SK-N-SH (cell line): ENCODE measurements at regions of chr11 and their contacts with region 1.

Region 1: GRCh38 chr11:76734456-76735420 is 48.4 kb upstream of the TSKU start:
- DNase-seq: no peak
- H3K4me3 ChIP-seq: no peak overlapping the region
- H3K27ac ChIP-seq: peak overlapping the region in 1 of 2 experiments; percentile 3; a peak in 1 of 4 replicates
- H3K4me1 ChIP-seq: peaks cover 0 to 16% of the 10 kb centered on the region in 2 experiments; a peak in 1 of 4 replicates
- H3K27me3 ChIP-seq: peaks cover 6% of the 10 kb centered on the region; the same call in 1 of the 2 replicates
- CTCF ChIP-seq: no peak
- EP300 ChIP-seq: no peak
- RAD21 ChIP-seq: no peak

Region 2: DNA sequence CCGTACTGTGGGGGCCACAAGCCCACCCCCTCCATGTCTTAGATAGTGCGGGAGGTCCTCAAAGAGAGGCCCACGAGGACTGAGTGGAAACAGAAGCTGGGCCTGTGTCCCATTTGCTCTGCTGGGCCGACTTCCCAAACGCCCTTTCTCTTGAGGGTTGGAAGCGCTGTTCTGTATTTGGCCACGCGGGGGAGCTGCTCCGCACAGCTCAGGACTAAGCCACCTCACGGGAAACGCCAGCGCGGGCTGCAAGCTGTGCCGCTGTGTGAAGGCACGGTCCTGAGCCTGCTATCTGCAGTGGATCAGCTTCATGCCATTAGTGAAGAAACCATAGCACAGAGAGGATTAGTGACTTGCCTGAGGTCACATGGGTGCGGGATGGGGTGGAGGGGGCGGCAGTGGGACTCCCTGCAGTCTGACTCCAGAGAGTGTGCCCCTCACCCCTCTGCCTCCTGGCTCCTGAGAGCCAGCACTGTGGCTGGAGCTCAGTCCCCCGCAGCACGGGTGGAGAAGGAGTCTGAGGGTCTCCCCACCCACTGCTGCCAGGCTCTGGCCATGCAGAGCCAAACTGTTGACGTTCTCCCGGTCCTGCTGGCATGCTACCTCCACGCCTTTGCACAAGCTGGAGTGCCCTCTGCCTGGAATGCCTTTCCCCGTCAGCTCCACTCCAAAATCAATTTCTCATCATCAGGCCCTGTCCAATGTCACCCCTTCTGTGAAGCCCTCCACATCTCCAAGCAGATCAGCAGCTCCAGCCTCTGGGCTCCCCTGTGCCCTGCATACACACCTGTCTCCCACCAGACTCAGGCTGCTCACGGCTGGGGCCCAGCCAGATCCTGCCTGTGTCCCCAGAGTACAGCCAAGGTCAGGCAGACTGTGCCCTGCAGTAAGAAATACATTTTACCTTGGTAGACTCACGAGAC is 12.7 kb before region 1 on chr11:
- CTCF ChIA-PET with region 1: interaction called, 37 read pairs
- POLR2A ChIA-PET with region 1: no interaction called
- DNase-seq: peak; percentile 86
- H3K4me3 ChIP-seq: peak overlapping the region in 1 of 2 experiments; percentile 40; a peak in 2 of 4 replicates
- H3K27ac ChIP-seq: no peak overlapping the region; a peak in 1 of 4 replicates
- H3K4me1 ChIP-seq: peaks cover 0 to 4% of the 10 kb centered on the region in 2 experiments; a peak in 1 of 4 replicates
- H3K27me3 ChIP-seq: peaks cover 21% of the 10 kb centered on the region; the same call in 1 of the 2 replicates
- CTCF ChIP-seq: peak; percentile 85
- EP300 ChIP-seq: no peak
- RAD21 ChIP-seq: peak; percentile 69

Region 3: DNA sequence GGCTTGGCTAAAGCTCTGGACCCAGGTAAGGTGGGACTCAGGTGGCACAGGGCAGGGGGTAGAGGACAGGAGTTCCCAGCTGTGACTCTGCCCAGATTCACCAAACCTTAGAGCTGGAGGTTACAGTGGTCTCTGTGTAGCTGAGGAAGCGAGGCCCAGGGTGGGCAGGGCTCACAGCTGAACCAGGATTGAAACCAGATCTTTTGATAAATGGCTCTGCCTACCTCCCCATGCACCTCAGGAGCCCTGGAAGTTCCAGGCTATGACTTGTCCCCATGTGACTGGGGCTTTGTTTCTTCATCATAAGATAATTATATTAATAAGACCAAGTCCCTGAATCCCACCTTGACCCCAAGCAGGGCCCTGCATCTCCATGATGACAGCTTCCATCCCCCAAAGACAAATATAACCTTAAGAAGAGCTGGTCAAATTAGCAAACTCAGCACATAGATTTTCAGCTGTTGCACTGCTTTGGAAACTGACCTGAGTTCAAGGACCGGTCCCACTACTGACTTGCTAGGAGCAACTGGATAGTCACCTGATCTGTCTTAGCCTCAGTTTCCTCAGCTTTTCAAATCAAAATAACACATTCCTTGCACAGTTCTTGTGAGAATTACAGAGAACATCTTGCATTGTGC is 27.1 kb after region 1 on chr11:
- CTCF ChIA-PET with region 1: interaction called, 12 read pairs
- POLR2A ChIA-PET with region 1: no interaction called
- DNase-seq: no peak
- H3K4me3 ChIP-seq: no peak overlapping the region
- H3K27ac ChIP-seq: no peak overlapping the region
- H3K4me1 ChIP-seq: peaks cover under 1 to 13% of the 10 kb centered on the region in 2 experiments; a peak in 3 of 4 replicates
- H3K27me3 ChIP-seq: no peaks in the 10 kb centered on the region; the same call in 1 of the 2 replicates
- CTCF ChIP-seq: no peak
- EP300 ChIP-seq: no peak
- RAD21 ChIP-seq: no peak

Region 4: GRCh38 chr11:76788661-76789439 is 54.1 kb after region 1 on chr11:
- CTCF ChIA-PET with region 1: interaction called, 11 read pairs
- POLR2A ChIA-PET with region 1: no interaction called
- DNase-seq: no peak
- H3K4me3 ChIP-seq: no peak overlapping the region
- H3K27ac ChIP-seq: peak overlapping the region in 1 of 2 experiments; percentile 43; a peak in 1 of 4 replicates
- H3K4me1 ChIP-seq: peaks cover 14 to 67% of the 10 kb centered on the region in 2 experiments; a peak in 3 of 4 replicates
- H3K27me3 ChIP-seq: no peaks in the 10 kb centered on the region
- CTCF ChIP-seq: no peak
- EP300 ChIP-seq: no peak
- RAD21 ChIP-seq: no peak

Region 5: GRCh38 chr11:76807206-76807875 is 72.6 kb after region 1 on chr11:
- CTCF ChIA-PET with region 1: interaction called, 205 read pairs
- POLR2A ChIA-PET with region 1: no interaction called
- DNase-seq: peak; percentile 83
- H3K4me3 ChIP-seq: no peak overlapping the region; a peak in 1 of 4 replicates
- H3K27ac ChIP-seq: no peak overlapping the region
- H3K4me1 ChIP-seq: peaks cover 0 to 9% of the 10 kb centered on the region in 2 experiments; a peak in 1 of 4 replicates
- H3K27me3 ChIP-seq: no peaks in the 10 kb centered on the region
- CTCF ChIP-seq: peak; percentile 78
- EP300 ChIP-seq: no peak
- RAD21 ChIP-seq: peak; percentile 51

Region 6: GRCh38 chr11:76946245-76946644 is 211.5 kb after region 1 on chr11:
- CTCF ChIA-PET with region 1: no interaction called
- POLR2A ChIA-PET with region 1: no interaction called
- DNase-seq: no peak
- H3K4me3 ChIP-seq: no peak overlapping the region
- H3K27ac ChIP-seq: no peak overlapping the region
- H3K4me1 ChIP-seq: peaks cover 0 to 5% of the 10 kb centered on the region in 2 experiments; a peak in 2 of 4 replicates
- H3K27me3 ChIP-seq: no peaks in the 10 kb centered on the region
- CTCF ChIP-seq: no peak
- EP300 ChIP-seq: no peak
- RAD21 ChIP-seq: no peak

Region 7: GRCh38 chr11:77039491-77040400 is 305.0 kb after region 1 on chr11:
- CTCF ChIA-PET with region 1: interaction called, 34 read pairs
- POLR2A ChIA-PET with region 1: no interaction called
- DNase-seq: peak; percentile 81
- H3K4me3 ChIP-seq: peak overlapping the region; percentile 42 to 59
- H3K27ac ChIP-seq: no peak overlapping the region
- H3K4me1 ChIP-seq: peaks cover 0 to 3% of the 10 kb centered on the region in 2 experiments; a peak in 1 of 4 replicates
- H3K27me3 ChIP-seq: no peaks in the 10 kb centered on the region
- CTCF ChIP-seq: peak; percentile 65
- EP300 ChIP-seq: no peak
- RAD21 ChIP-seq: peak; percentile 52

Region 8: DNA sequence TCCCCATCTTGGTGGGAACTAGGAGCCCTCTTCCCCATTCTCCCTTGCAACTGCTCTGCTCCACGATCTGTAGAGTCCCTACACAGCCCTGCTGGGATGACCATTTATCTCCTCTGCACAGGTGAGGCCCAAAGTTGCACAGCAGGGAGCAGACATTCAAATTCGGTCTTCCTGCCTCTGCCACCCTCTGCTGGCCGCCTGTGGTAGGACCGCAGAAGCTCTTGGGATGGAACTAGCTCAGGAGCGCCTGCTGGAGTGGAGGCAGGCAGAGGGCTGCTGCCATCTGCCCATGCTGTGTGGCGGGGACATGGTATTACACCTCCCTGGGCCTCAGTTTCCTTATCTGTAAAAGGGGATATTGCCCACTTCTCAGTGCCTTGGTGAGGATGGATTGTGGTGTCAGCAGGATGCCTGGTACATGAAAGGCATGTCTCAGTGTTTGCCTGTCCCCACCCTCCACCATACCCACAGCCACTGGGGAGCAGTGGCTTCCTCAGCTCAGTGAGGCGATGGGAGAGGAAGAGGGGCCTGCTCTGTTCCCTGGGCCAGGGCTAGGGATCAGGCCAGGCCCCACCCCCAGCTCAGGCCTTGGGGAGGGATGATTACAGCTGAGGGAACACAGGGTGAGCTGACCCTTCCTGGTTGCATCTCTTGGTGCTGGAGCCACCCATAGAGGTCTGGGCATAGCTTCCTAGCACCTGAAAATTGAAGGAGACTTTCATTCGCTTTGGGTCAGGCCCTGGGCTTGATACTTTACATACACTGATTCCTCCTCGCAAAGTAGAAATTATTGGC is 356.6 kb after region 1 on chr11:
- CTCF ChIA-PET with region 1: interaction called, 11 read pairs
- POLR2A ChIA-PET with region 1: no interaction called
- DNase-seq: peak; percentile 93
- H3K4me3 ChIP-seq: no peak overlapping the region; a peak in 1 of 4 replicates
- H3K27ac ChIP-seq: no peak overlapping the region
- H3K4me1 ChIP-seq: peaks cover 0 to 21% of the 10 kb centered on the region in 2 experiments; a peak in 1 of 4 replicates
- H3K27me3 ChIP-seq: no peaks in the 10 kb centered on the region
- CTCF ChIP-seq: peak; percentile 89
- EP300 ChIP-seq: no peak
- RAD21 ChIP-seq: peak; percentile 95